CD14-positive monocyte (primary cell): ENCODE measurements at regions of chr5 and their contacts with region 1.

Region 1: GRCh38 chr5:36507332-36507952 is 99.0 kb upstream of the SLC1A3 start:
- DNase-seq: peak; percentile 46 to 64 (median 56)
- H3K4me3 ChIP-seq: no peak overlapping the region
- H3K4me3 Mint-ChIP-seq: no peak overlapping the region
- H3K27ac ChIP-seq: no peak overlapping the region
- H3K27ac Mint-ChIP-seq: no peak overlapping the region
- H3K4me1 ChIP-seq: no peaks in the 10 kb centered on the region
- H3K4me1 Mint-ChIP-seq: peaks cover 2% of the 10 kb centered on the region
- H3K27me3 ChIP-seq: no peaks in the 10 kb centered on the region
- H3K27me3 Mint-ChIP-seq: peaks cover 0 to 5% (median 2%) of the 10 kb centered on the region in 3 donors
- CTCF ChIP-seq: peak; percentile 87

Region 2: DNA sequence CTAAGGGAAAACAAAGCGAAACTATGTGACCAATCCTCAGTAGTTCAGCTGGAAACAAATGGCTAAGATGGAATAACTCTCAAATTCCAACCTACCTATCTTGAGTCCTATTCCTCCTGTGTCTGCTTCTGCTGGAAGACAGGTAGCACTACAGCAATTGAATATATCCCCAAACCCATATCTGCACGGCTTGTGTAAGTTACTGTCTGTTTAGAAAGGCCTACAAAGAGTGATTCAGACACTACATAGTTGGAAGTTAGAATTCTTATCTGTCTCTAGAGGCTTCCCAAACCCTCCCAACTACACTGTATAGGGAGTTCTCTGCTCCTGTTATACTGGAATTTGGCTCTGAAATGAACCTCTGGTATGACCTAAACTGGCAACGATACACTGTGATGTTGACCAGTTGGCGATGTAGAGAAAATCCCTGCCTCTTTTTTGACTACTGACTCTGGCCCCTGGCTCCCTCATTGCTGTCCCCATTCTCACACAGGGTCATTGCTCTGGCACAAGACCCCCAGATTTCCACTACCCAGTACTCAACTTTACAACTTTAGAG is 243.2 kb before region 1 on chr5:
- intact Hi-C with region 1: loop called (anchors 5 to 10 kb)
- DNase-seq: no peak
- H3K4me3 ChIP-seq: no peak overlapping the region
- H3K4me3 Mint-ChIP-seq: no peak overlapping the region
- H3K27ac ChIP-seq: no peak overlapping the region
- H3K27ac Mint-ChIP-seq: peak overlapping the region in 1 of 7 donors; percentile 25
- H3K4me1 ChIP-seq: no peaks in the 10 kb centered on the region
- H3K4me1 Mint-ChIP-seq: peaks cover 2% of the 10 kb centered on the region
- H3K27me3 ChIP-seq: no peaks in the 10 kb centered on the region
- H3K27me3 Mint-ChIP-seq: peaks cover 0 to 3% (median 3%) of the 10 kb centered on the region in 3 donors
- CTCF ChIP-seq: no peak

Region 3: DNA sequence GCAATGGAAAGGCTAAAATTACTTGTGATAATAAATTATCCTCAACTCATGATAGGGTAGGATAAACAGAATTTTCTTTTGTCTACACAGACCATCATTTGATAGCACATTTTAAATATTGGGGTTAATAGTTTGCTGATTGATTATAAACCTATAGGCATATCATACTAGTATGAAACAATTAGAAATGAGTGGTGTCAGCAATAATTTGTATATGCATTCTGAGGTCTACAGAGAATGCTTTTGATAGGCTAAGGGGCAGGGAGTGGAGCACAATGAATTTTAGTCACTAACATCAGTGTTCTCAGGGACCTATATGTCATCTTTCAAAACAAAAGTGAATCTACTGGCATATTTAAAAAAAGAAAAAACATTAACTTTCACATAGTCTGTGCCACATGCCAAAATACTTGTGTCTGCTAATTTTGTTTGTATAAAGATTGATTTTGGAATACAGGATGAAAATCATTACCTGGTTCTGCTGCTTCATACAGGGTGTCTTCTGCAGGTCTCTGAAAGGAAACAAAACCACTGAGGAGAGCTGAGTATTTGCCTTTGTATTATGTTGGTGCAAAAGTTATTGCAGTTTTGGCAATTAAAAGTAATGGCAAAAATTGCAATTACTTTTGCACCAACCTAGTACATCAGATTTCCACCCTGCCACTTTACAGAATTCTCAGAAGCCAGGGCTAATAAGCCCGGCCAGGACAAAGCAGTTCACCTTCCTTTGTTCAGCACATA is 237.8 kb before region 1 on chr5:
- intact Hi-C with region 1: loop called (anchors 5 to 10 kb)
- DNase-seq: no peak
- H3K4me3 ChIP-seq: no peak overlapping the region
- H3K4me3 Mint-ChIP-seq: no peak overlapping the region
- H3K27ac ChIP-seq: no peak overlapping the region
- H3K27ac Mint-ChIP-seq: no peak overlapping the region
- H3K4me1 ChIP-seq: peaks cover 13 to 14% of the 10 kb centered on the region in 2 donors
- H3K4me1 Mint-ChIP-seq: peaks cover 17% of the 10 kb centered on the region
- H3K27me3 ChIP-seq: no peaks in the 10 kb centered on the region
- H3K27me3 Mint-ChIP-seq: peaks cover 0 to 1% (median 0%) of the 10 kb centered on the region in 3 donors
- CTCF ChIP-seq: no peak

Region 4: DNA sequence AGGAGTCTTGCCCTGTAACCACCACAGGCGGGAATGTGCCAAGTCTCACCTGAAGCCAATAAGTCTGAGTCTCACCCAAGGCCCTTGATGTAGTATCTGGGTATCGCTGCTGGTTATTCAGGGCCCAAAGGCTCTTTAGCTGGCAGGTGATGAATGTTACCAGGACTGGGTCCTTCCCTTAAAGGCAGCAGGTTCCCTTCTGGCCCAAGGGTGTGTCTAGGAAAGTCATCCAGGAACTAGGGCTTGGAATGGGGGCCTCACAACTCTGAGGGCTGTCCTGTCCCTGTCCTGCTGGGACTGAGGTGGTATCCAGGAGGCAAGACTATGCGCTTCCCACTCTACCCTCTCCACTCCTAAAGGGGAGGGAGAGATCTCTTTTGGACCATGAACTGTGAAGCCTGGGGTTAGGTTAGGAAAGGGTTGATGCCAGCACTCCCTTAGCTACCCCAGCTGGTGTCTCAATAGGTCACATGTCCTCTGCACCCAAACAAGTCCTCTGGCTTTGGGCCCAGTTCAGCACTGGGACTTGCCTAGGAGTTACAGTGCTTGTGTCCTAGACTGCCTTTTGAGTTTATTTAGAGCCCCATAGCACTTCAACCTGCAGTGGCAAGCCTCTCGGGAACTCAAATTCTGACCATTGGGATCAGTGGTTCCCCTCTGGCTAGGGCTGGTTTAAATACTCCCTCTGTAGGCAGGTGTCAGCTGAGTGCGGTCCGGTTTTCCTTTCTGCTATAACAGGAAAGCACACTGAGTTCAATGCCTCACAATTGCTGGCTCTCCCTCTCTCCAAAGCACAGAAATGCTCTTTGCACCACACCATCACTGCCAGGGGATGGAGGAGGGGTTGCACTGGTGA is 183.3 kb before region 1 on chr5:
- intact Hi-C with region 1: no loop called
- DNase-seq: no peak
- H3K4me3 ChIP-seq: no peak overlapping the region
- H3K4me3 Mint-ChIP-seq: no peak overlapping the region
- H3K27ac ChIP-seq: no peak overlapping the region
- H3K27ac Mint-ChIP-seq: no peak overlapping the region
- H3K4me1 ChIP-seq: no peaks in the 10 kb centered on the region
- H3K4me1 Mint-ChIP-seq: no peaks in the 10 kb centered on the region
- H3K27me3 ChIP-seq: no peaks in the 10 kb centered on the region
- H3K27me3 Mint-ChIP-seq: peaks cover 0 to 3% (median 1%) of the 10 kb centered on the region in 3 donors
- CTCF ChIP-seq: no peak

Region 5: DNA sequence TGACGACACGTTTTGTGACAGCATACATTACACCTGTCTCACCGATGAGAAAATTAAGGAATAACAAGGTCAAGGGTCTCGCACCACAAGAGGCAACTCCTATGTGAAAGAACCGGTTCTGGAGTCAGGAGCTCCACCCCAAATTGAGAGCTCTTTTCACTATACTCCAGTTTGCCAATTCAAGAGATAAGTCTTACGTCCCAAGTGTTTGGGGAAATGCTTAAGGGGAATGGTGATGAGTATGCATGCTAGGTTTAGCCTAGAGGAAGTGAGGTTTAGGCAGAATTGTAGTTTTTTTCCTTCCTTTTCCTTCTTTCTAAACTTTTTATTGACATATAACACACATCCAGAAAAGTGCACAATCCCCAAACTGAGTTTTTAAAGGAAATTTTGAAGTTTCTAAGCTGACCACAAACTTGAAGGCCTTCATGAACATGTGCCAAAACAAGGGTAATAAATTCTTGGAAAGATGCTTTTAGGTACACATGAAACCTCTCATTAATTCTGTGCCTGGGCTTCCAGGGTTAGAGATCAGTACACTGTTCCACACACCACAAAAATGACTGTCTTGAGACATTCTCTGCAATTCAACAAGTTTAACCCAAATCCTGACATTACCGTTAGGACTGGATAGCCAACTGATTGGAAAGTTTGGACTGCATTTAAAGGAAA is 28.7 kb before region 1 on chr5:
- intact Hi-C with region 1: no loop called
- DNase-seq: no peak
- H3K4me3 ChIP-seq: no peak overlapping the region
- H3K4me3 Mint-ChIP-seq: no peak overlapping the region
- H3K27ac ChIP-seq: no peak overlapping the region
- H3K27ac Mint-ChIP-seq: no peak overlapping the region
- H3K4me1 ChIP-seq: no peaks in the 10 kb centered on the region
- H3K4me1 Mint-ChIP-seq: no peaks in the 10 kb centered on the region
- H3K27me3 ChIP-seq: no peaks in the 10 kb centered on the region
- H3K27me3 Mint-ChIP-seq: no peaks in the 10 kb centered on the region
- CTCF ChIP-seq: no peak